Left colon (tissue), 2 donors: ENCODE measurements at regions of chr10 and their contacts with region 1.

Region 1: GRCh38 chr10:125982260-125982948 is 86.0 kb downstream of the FANK1 start:
- DNase-seq: no peak
- ATAC-seq: peak; percentile 79

Region 2: DNA sequence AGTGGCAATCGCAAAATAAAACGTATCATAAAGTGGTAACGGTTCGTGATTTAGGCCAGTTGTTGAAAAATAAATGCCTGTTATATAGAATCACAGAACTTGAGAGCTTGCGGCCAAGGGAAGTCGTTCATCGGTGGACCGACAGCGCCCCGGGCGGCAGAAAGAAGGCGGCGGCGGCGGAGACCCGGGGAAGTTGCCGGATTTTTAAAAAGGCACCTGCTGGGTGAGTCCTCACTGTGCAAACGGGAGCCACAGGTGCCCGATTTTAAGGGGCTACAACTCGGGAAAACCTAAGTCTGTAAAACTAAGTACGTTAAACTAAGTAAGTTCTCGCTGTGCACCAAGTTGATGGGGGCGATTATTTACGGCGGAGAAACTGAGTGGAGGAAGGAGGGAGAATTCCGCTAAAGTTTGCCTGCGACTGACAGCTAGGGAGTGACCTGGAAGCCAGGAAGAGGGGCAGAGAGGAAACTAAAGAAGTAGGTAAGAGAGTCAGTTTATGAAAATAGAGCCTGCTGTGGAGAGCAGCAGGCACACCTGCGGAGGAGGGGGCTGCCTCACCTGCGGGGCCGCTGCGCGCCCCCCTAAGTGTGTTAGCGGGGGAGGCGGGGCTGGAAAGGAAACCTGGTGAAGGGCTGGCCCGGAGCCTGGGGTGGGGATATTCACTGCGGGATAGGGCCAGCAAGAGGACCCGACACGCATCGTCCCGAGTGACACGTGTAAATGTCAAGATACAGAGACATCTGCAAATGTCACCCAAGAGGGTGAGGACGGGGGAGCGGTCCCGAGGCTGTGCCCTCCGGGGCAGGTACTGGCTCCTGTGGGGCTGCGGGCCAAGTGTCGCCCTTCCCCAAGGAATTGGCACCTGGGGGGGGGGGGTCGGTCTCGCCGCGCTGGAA is 404.9 kb after region 1 on chr10:
- intact Hi-C with region 1: loop called in 1 of 2 experiments (anchors 5 kb)
- DNase-seq: peak in 1 of 2 donors; percentile 80
- ATAC-seq: peak; percentile 94

Region 3: DNA sequence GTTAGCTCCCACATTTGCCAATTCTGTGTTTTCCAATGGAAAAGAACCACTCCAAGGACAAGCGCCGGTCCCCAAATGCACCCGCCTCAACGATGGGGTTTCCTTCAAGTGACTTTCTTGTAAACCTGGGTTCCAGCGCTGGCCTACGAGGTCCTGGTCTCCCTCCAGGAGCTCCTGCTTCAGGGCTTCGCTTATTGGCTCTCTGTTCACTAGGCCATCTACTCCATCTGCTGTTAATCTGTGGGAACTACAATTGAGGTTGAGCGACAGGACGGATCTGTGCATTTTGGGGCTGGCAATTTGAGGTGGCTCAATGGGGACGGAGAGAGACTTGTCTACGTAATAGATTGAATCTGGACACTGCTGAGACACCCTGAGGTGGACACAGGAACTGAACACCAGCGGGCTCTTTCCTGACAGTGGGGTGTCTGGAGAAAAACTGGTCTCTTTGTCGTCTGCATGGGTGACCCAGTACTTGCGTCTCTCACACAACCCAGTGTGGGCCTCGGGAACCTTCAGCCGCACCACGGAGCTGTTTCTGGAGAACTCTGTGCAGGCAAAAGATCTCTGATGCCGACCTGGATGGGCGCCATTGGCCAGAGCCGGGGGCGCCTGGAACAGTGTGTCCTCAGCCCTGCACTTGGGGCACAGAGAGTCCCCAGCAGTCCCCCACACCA is 521.8 kb after region 1 on chr10:
- intact Hi-C with region 1: loop called in 1 of 2 experiments (anchors 10 kb)
- DNase-seq: peak in 1 of 2 donors; percentile 12
- ATAC-seq: peak; percentile 71

Region 4: GRCh38 chr10:126759531-126759930 is 777.1 kb after region 1 on chr10:
- intact Hi-C with region 1: no loop called
- DNase-seq: no peak
- ATAC-seq: no peak